Esophagus squamous epithelium (tissue), 5 donors: ENCODE measurements at regions of chr16 and their contacts with region 1.

Region 1: GRCh38 chr16:57600048-57600835 is 28.2 kb upstream of the ADGRG1 start:
- DNase-seq: no peak
- H3K4me3 ChIP-seq: no peak overlapping the region
- H3K27ac ChIP-seq: peak overlapping the region in 1 of 4 donors; percentile 2
- H3K4me1 ChIP-seq: peaks cover 0 to 10% (median 3%) of the 10 kb centered on the region in 3 donors
- H3K27me3 ChIP-seq: peaks cover 0 to 17% (median 0%) of the 10 kb centered on the region in 4 donors
- CTCF ChIP-seq: peak; percentile 67 to 89 (median 80)
- POLR2A ChIP-seq: no peak

Region 2: GRCh38 chr16:57648590-57649442 is 48.6 kb after region 1 on chr16:
- intact Hi-C with region 1: loop called (anchors 5 kb)
- DNase-seq: peak; percentile 22
- H3K4me3 ChIP-seq: no peak overlapping the region
- H3K27ac ChIP-seq: peak overlapping the region in 3 of 4 donors; percentile 11 to 73 (median 70)
- H3K4me1 ChIP-seq: peaks cover 11 to 60% (median 33%) of the 10 kb centered on the region in 3 donors
- H3K27me3 ChIP-seq: peaks cover 0 to 12% (median 0%) of the 10 kb centered on the region in 4 donors
- CTCF ChIP-seq: peak; percentile 98 to 100 (median 100)
- POLR2A ChIP-seq: no peak

Region 3: GRCh38 chr16:57775661-57776469 is 175.6 kb after region 1 on chr16:
- intact Hi-C with region 1: no loop called
- DNase-seq: no peak
- H3K4me3 ChIP-seq: no peak overlapping the region
- H3K27ac ChIP-seq: no peak overlapping the region
- H3K4me1 ChIP-seq: no peaks in the 10 kb centered on the region
- H3K27me3 ChIP-seq: no peaks in the 10 kb centered on the region
- CTCF ChIP-seq: peak in 3 of 6 experiments; percentile 4 to 17 (median 11)
- POLR2A ChIP-seq: no peak